Caco-2 (cell line): ENCODE measurements at regions of chr3 and their contacts with region 1.

Region 1: GRCh38 chr3:50611464-50612233 is at the start of gene CISH:
- DNase-seq: peak; percentile 96 to 97
- H3K4me3 ChIP-seq: peak within 1 kb of the TSS; percentile 74
- H3K4me3 Mint-ChIP-seq: peak within 1 kb of the TSS; percentile 83
- H3K27ac Mint-ChIP-seq: peak within 1 kb of the TSS; percentile 81
- H3K4me1 ChIP-seq: peaks cover 11% of the 10 kb centered on the region
- H3K4me1 Mint-ChIP-seq: peaks cover 23% of the 10 kb centered on the region
- H3K27me3 ChIP-seq: no peaks in the 10 kb centered on the region
- H3K27me3 Mint-ChIP-seq: peaks cover 4% of the 10 kb centered on the region
- CTCF ChIP-seq: peak; percentile 27 to 55
- total RNA-seq, gene CISH: 2.9 and 3.4 TPM in 2 replicates

Region 2: DNA sequence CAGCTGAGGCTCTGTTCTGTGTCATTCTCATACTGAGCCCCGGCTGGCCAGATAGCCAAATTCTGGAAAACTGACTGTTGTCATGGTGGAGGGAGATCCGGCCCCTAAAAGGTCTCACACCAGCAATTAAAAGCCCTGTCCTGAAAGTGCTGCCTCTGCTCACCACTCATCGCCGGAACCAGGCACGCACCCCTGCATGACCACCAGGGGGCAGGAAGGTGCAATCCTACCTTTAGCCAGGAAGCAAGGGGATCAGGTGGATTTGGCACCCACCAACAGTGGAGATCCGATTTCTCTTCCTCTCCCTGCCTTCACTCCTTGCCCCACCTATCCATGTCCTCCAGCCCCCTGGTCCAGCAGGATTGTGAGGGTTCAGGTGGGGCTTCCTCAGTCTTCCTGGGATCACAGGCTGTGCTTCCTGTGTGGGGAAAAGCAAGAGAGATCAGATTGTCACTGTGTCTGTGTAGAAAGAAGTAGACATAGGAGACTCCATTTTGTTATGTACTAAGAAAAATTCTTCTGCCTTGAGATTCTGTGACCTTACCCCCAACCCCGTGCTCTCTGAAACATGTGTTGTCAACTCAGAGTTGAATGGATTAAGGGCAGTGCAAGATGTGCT is 92.1 kb before region 1 on chr3:
- CTCF ChIA-PET with region 1: interaction called, 3 read pairs
- POLR2A ChIA-PET with region 1: no interaction called
- intact Hi-C with region 1: loop called (anchors 1 kb)
- DNase-seq: peak; percentile 74 to 83
- H3K4me3 ChIP-seq: no peak overlapping the region
- H3K4me3 Mint-ChIP-seq: no peak overlapping the region
- H3K27ac Mint-ChIP-seq: no peak overlapping the region
- H3K4me1 ChIP-seq: 0 out of 2 replicates have a peak, but pooled peaks cover 11% of the 10 kb centered on the region
- H3K4me1 Mint-ChIP-seq: no peaks in the 10 kb centered on the region
- H3K27me3 ChIP-seq: no peaks in the 10 kb centered on the region; the same call in none of the 2 replicates
- H3K27me3 Mint-ChIP-seq: peaks cover 4% of the 10 kb centered on the region
- CTCF ChIP-seq: peak; percentile 91 to 96

Region 3: GRCh38 chr3:50587806-50588758 is 23.6 kb before region 1 on chr3:
- CTCF ChIA-PET with region 1: interaction called, 13 read pairs
- POLR2A ChIA-PET with region 1: no interaction called
- intact Hi-C with region 1: loop called (anchors 1 kb)
- DNase-seq: no peak
- H3K4me3 ChIP-seq: no peak overlapping the region
- H3K4me3 Mint-ChIP-seq: no peak overlapping the region
- H3K27ac Mint-ChIP-seq: no peak overlapping the region
- H3K4me1 ChIP-seq: peaks cover 25% of the 10 kb centered on the region
- H3K4me1 Mint-ChIP-seq: peaks cover 17% of the 10 kb centered on the region
- H3K27me3 ChIP-seq: no peaks in the 10 kb centered on the region
- H3K27me3 Mint-ChIP-seq: no peaks in the 10 kb centered on the region
- CTCF ChIP-seq: no peak

Region 4: DNA sequence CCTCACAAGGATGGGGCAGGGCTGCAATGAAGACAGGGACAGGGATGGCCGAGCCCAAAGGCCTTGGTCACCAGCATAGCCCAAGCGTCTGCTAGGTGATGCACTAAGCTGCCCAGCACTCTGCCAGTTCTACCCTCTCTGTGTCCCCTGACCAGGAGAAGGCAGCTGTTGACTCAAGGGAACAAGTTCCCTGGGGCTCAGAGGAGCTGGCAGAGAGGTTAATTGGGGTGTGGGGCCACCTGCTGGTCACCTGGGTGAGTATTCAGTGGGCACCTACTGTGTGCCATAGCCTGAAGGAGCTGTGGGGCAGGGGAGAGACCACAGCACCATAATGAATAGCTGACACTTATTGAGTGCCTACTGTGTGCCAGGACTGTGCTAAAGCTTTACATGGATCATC is 41.1 kb after region 1 on chr3:
- CTCF ChIA-PET with region 1: interaction called, 91 read pairs
- POLR2A ChIA-PET with region 1: interaction called, 5 read pairs
- intact Hi-C with region 1: loop called (anchors 1 kb)
- DNase-seq: peak; percentile 67 to 72
- H3K4me3 ChIP-seq: no peak overlapping the region
- H3K4me3 Mint-ChIP-seq: no peak overlapping the region
- H3K27ac Mint-ChIP-seq: no peak overlapping the region
- H3K4me1 ChIP-seq: no peaks in the 10 kb centered on the region
- H3K4me1 Mint-ChIP-seq: no peaks in the 10 kb centered on the region
- H3K27me3 ChIP-seq: no peaks in the 10 kb centered on the region
- H3K27me3 Mint-ChIP-seq: peaks cover 3% of the 10 kb centered on the region
- CTCF ChIP-seq: peak; percentile 55 to 60

Region 5: DNA sequence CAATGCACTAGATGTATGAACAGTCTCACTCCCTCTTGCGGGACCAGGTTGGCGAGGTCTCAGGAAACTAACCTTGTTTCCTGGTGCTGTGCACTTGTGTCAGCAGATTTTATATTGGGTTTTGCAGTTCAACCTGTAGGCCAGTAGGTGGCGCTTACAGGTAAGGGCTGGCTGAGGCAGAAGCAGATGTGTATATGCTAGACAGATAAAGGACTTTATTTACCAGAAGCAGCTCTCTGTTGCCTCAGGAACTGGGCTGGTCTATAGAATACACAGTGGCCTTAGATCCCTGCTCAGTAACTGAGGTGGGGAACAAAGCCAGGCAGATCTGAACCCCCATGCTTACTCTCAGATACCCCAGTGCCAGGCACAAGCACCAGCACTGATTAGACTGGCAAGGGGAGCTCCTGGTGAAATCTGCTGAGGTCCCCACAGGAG is 359.9 kb after region 1 on chr3:
- CTCF ChIA-PET with region 1: interaction called, 13 read pairs
- POLR2A ChIA-PET with region 1: no interaction called
- intact Hi-C with region 1: loop called (anchors 2 kb)
- DNase-seq: peak; percentile 60 to 63
- H3K4me3 ChIP-seq: no peak overlapping the region
- H3K4me3 Mint-ChIP-seq: no peak overlapping the region
- H3K27ac Mint-ChIP-seq: no peak overlapping the region
- H3K4me1 ChIP-seq: no peaks in the 10 kb centered on the region
- H3K4me1 Mint-ChIP-seq: no peaks in the 10 kb centered on the region
- H3K27me3 ChIP-seq: no peaks in the 10 kb centered on the region
- H3K27me3 Mint-ChIP-seq: no peaks in the 10 kb centered on the region
- CTCF ChIP-seq: peak; percentile 69 to 83

Region 6: GRCh38 chr3:51371943-51372557 is 760.4 kb after region 1 on chr3:
- CTCF ChIA-PET with region 1: interaction called, 9 read pairs
- POLR2A ChIA-PET with region 1: no interaction called
- intact Hi-C with region 1: loop called (anchors 1 kb)
- DNase-seq: peak; percentile 56 to 70
- H3K4me3 ChIP-seq: no peak overlapping the region
- H3K4me3 Mint-ChIP-seq: no peak overlapping the region
- H3K27ac Mint-ChIP-seq: no peak overlapping the region
- H3K4me1 ChIP-seq: no peaks in the 10 kb centered on the region
- H3K4me1 Mint-ChIP-seq: no peaks in the 10 kb centered on the region
- H3K27me3 ChIP-seq: no peaks in the 10 kb centered on the region
- H3K27me3 Mint-ChIP-seq: peaks cover 30% of the 10 kb centered on the region
- CTCF ChIP-seq: peak; percentile 64 to 70